MCF 10A (cell line): ENCODE measurements at regions of chr7 and their contacts with region 1.

Region 1: GRCh38 chr7:41696314-41696916 is 6.5 kb downstream of the INHBA start:
- DNase-seq: peak; percentile 89
- H3K4me3 Mint-ChIP-seq: peak overlapping the region; percentile 76
- H3K27ac Mint-ChIP-seq: peak overlapping the region; percentile 59
- H3K4me1 Mint-ChIP-seq: peaks cover 59% of the 10 kb centered on the region
- H3K27me3 Mint-ChIP-seq: no peaks in the 10 kb centered on the region
- CTCF ChIP-seq: peak; percentile 69

Region 2: DNA sequence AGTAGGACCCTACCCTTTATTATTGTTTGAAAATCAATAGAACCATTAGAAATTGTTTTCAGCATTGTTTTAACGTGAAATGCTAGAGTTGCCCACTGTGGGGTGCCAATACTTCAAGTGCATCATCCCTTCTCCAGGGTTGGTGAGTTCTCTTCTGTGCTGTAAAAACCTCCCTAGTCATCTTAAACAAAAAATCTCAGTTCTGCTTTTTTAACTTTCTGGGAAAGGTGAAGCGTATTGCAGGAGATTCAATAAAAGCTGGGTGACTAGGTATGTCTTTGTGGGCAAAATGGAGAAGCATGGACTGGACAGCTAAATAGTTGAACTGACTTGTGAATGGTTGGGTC is 862.6 kb before region 1 on chr7:
- CTCF ChIA-PET with region 1: interaction called, 5 read pairs
- POLR2A ChIA-PET with region 1: no interaction called
- intact Hi-C with region 1: loop called (anchors 1 kb)
- DNase-seq: no peak
- H3K4me3 Mint-ChIP-seq: no peak overlapping the region
- H3K27ac Mint-ChIP-seq: no peak overlapping the region
- H3K4me1 Mint-ChIP-seq: peaks cover 17% of the 10 kb centered on the region
- H3K27me3 Mint-ChIP-seq: no peaks in the 10 kb centered on the region
- CTCF ChIP-seq: peak; percentile 31

Region 3: DNA sequence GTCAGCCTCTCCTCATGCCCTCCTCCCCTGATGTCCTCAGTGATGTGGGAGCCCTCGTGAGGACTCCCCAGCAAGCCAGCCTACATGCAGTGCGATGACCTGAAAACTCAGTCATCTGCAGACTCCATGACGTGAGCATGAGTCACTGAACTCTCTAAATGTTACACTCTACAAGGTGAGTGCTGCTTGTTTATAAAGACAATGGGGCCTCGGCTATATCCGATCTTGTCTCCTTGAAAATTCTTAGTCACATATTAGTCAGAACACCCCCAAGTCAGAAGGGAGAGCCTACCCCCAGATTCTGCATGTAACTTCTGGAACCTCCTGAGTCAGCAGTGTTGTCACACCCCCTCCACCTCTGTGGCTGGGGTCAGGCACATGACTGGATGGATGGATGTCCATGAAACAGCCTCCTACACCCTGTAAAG is 667.3 kb before region 1 on chr7:
- CTCF ChIA-PET with region 1: interaction called, 3 read pairs
- POLR2A ChIA-PET with region 1: no interaction called
- intact Hi-C with region 1: loop called (anchors 5 kb)
- DNase-seq: peak; percentile 87
- H3K4me3 Mint-ChIP-seq: no peak overlapping the region
- H3K27ac Mint-ChIP-seq: peak overlapping the region; percentile 71
- H3K4me1 Mint-ChIP-seq: peaks cover 24% of the 10 kb centered on the region
- H3K27me3 Mint-ChIP-seq: no peaks in the 10 kb centered on the region
- CTCF ChIP-seq: no peak

Region 4: DNA sequence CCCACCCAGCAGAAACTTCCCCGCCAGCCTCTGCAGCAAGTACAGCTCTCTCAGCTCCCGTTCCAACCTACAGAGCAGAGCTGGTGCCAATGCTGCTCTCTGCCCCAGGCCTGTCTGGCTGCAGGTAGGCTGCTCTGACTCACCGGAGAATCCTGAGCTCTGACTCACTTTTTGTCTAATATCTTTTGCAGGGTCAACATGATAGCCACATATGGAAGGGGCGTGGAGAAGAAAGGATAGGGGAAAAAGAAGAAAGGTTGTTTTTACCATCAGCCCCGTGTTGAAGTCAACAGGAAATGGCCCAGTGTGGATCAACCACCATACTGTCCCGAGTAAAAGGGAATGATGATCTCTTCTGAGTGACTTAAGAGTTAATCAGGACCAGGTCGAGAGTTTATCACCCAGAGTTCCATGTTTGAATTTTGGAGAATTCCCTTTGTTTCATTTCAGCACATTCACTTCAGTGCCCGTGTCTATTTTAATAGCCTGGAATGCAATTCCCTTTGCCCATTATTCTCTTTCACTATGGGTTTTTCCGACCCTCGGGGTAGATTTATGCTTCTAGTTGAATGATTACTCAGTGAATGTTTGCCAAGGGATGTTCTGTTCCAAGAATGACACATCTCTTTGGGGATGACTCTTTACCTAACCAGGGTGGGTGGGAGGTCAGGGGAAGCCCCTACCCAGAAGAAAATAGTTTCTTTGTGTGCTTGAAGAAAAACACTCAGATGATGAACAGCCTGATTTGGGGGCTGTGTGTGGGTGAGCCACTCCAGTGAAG is 588.6 kb before region 1 on chr7:
- CTCF ChIA-PET with region 1: interaction called, 5 read pairs
- POLR2A ChIA-PET with region 1: interaction called, 3 read pairs
- intact Hi-C with region 1: loop called (anchors 5 kb)
- DNase-seq: peak; percentile 93
- H3K4me3 Mint-ChIP-seq: peak overlapping the region; percentile 48
- H3K27ac Mint-ChIP-seq: peak overlapping the region; percentile 52
- H3K4me1 Mint-ChIP-seq: peaks cover 45% of the 10 kb centered on the region
- H3K27me3 Mint-ChIP-seq: no peaks in the 10 kb centered on the region
- CTCF ChIP-seq: no peak

Region 5: GRCh38 chr7:41224063-41224806 is 472.2 kb before region 1 on chr7:
- CTCF ChIA-PET with region 1: interaction called, 3 read pairs
- POLR2A ChIA-PET with region 1: no interaction called
- intact Hi-C with region 1: loop called (anchors 10 kb)
- DNase-seq: peak; percentile 80
- H3K4me3 Mint-ChIP-seq: no peak overlapping the region
- H3K27ac Mint-ChIP-seq: no peak overlapping the region
- H3K4me1 Mint-ChIP-seq: peaks cover 15% of the 10 kb centered on the region
- H3K27me3 Mint-ChIP-seq: no peaks in the 10 kb centered on the region
- CTCF ChIP-seq: no peak

Region 6: GRCh38 chr7:41608447-41608846 is 88.0 kb before region 1 on chr7:
- CTCF ChIA-PET with region 1: no interaction called
- POLR2A ChIA-PET with region 1: no interaction called
- intact Hi-C with region 1: no loop called
- DNase-seq: no peak
- H3K4me3 Mint-ChIP-seq: no peak overlapping the region
- H3K27ac Mint-ChIP-seq: no peak overlapping the region
- H3K4me1 Mint-ChIP-seq: no peaks in the 10 kb centered on the region
- H3K27me3 Mint-ChIP-seq: no peaks in the 10 kb centered on the region
- CTCF ChIP-seq: no peak

Region 7: DNA sequence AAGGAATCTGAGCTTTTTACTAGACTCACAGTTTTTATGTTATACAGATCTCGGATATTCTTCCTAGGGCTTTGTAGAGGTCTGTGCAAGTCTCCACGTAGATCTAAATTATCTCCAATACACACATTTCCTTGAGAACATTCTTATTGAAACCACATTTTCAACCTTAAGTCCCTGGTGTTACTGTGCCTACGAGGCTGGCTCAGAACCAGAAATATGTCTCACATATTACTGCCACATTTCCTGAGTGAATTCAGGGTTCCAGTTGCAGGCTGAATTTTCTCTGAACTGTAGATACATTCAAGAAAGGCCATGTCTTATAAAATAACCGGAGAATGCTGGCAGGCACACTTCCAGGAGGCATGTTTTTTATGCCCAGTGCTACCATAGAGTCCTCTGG is 40.0 kb before region 1 on chr7:
- CTCF ChIA-PET with region 1: no interaction called
- POLR2A ChIA-PET with region 1: no interaction called
- intact Hi-C with region 1: no loop called
- DNase-seq: no peak
- H3K4me3 Mint-ChIP-seq: no peak overlapping the region
- H3K27ac Mint-ChIP-seq: no peak overlapping the region
- H3K4me1 Mint-ChIP-seq: no peaks in the 10 kb centered on the region
- H3K27me3 Mint-ChIP-seq: no peaks in the 10 kb centered on the region
- CTCF ChIP-seq: no peak